HepG2 (cell line): ENCODE measurements at regions of chr17 and their contacts with region 1.

Region 1: DNA sequence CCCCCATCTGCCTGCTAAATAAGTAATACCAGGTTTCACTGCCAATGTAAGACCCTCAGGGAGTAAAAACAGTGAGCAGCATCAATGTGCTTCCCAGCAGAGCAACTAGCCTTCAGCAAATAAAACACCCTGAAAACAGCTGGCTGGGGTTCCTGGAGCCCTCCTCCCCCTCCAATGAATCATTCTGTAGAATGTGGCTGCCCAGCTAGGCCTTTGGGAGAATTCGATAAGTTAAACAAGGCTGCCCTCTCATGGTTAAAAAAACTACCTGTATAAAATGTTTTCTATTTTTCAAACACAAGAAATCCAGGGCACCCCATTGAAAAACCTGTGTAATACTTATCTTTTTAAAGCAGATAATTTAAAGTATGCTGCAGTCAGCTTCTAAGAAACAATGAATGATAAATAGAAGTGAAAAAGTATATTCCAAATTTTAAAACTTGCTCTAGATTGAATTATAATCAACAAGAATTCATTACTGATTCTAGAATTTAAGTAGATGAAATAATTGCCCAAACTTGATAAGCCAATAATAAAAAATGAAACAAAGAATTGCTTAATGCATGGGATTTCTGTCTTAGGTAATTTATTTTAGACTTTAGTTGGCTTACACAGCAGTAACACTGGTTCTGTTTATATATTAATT is 9.4 kb upstream of the TOM1L1 start:
- DNase-seq: peak; percentile 61
- ATAC-seq: peak; percentile 94
- H3K4me3 ChIP-seq: no peak overlapping the region
- H3K27ac ChIP-seq: no peak overlapping the region
- H3K4me1 ChIP-seq: no peaks in the 10 kb centered on the region
- H3K27me3 ChIP-seq: no peaks in the 10 kb centered on the region
- CTCF ChIP-seq: peak; percentile 75
- EP300 ChIP-seq: no peak
- POLR2A ChIP-seq: no peak
- RAD21 ChIP-seq: peak; percentile 63

Region 2: GRCh38 chr17:53032861-53033271 is 1858.4 kb before region 1 on chr17:
- CTCF ChIA-PET with region 1: interaction called, 5 read pairs
- POLR2A ChIA-PET with region 1: no interaction called
- in situ Hi-C with region 1: loop called (anchors 25 kb)
- intact Hi-C with region 1: no loop called
- DNase-seq: peak; percentile 71
- ATAC-seq: peak; percentile 90
- H3K4me3 ChIP-seq: no peak overlapping the region
- H3K27ac ChIP-seq: no peak overlapping the region
- H3K4me1 ChIP-seq: peaks cover 8% of the 10 kb centered on the region
- H3K27me3 ChIP-seq: no peaks in the 10 kb centered on the region
- CTCF ChIP-seq: peak; percentile 74
- EP300 ChIP-seq: no peak
- POLR2A ChIP-seq: no peak
- RAD21 ChIP-seq: peak; percentile 42; the same call in 1 of the 2 replicates

Region 3: DNA sequence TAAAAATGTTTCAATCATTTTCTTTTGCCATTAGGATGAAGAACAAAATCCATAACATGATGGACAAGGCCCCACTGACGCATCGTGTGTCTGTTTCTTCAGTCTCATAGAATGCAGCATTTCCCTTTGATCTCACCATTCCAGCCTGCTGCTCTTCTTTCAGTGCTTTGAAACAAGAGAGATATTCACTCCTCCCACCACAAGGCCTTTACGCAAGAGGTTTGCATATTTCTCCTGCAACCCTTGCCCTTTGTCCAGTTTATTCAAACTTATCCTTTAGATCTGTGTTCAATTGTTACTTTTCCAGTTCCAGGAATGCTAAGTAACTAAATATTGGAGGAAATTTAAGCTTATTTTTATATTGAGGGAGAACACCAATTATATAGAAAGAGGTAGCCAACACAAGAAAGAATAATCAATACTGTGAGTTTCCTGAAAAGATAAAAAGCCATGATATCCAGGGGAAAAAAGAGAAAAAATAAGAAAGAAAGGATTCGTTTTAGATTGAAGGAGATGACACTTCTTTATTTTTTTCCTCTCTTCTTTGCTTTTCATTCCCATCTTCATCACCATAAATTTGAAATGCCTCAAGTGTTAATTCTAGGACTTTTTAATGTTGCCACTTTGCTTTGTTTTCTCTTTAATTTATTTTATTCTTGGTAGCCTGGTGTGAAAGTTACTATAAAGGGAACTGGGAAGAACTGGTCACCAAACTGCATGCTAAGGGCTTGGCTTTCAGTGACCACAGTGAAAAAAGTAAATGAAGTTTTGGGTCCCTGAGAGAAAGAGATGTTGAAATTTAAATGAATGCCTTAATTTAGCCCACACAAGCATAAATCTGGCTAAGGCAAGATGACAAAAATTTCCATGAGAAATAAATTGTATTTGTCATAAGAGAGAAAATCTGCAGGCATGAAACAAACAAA is 966.5 kb before region 1 on chr17:
- CTCF ChIA-PET with region 1: no interaction called
- POLR2A ChIA-PET with region 1: no interaction called
- in situ Hi-C with region 1: loop called (anchors 25 kb)
- intact Hi-C with region 1: no loop called
- DNase-seq: peak; percentile 100
- ATAC-seq: peak; percentile 100
- H3K4me3 ChIP-seq: peak overlapping the region in 2 of 3 experiments; percentile 8 to 32; a peak in 2 of 6 replicates
- H3K27ac ChIP-seq: peak overlapping the region; percentile 80
- H3K4me1 ChIP-seq: peaks cover 36% of the 10 kb centered on the region
- H3K27me3 ChIP-seq: no peaks in the 10 kb centered on the region
- CTCF ChIP-seq: no peak
- EP300 ChIP-seq: peak; percentile 90 to 96
- POLR2A ChIP-seq: no peak
- RAD21 ChIP-seq: no peak

Region 4: GRCh38 chr17:54848368-54848987 is 42.8 kb before region 1 on chr17:
- CTCF ChIA-PET with region 1: no interaction called
- POLR2A ChIA-PET with region 1: no interaction called
- in situ Hi-C with region 1: no loop called
- intact Hi-C with region 1: no loop called
- DNase-seq: no peak
- ATAC-seq: no peak
- H3K4me3 ChIP-seq: no peak overlapping the region
- H3K27ac ChIP-seq: no peak overlapping the region
- H3K4me1 ChIP-seq: no peaks in the 10 kb centered on the region
- H3K27me3 ChIP-seq: no peaks in the 10 kb centered on the region
- CTCF ChIP-seq: no peak
- EP300 ChIP-seq: no peak
- POLR2A ChIP-seq: no peak
- RAD21 ChIP-seq: no peak

Region 5: DNA sequence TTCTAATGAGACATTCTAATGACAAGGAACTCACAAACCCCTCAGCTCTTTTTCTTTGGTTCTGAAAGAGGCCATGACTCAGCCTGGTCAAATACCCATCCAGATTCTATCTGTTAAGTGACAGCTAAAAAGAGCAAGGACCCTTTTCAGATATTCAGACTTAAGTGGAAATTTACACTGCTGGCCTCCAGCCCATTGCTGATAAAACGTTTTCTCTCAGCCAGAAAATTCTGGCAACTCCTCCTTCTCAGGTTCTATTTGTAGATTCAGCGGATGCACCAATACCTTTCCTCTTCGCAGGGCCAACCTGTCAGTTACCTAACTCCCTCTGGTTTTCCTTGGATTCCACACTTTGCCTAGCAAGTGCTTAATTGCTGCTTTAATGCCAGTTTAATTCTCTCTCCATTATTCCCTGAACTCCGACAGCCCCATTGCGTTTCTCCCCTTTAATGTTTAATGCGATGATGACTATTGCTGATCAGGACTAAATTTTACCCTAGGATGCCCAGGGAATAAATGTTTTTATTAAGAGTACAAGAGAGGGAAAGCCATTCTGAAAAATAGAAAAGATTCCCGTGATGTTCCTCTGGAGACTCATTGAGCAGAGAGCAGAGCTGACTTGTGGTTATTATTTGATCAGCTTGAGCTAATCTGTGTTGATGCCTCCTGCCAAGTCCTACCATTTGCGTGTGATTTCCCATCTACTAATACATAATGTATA is 26.5 kb before region 1 on chr17:
- CTCF ChIA-PET with region 1: no interaction called
- POLR2A ChIA-PET with region 1: no interaction called
- in situ Hi-C with region 1: no loop called
- intact Hi-C with region 1: no loop called
- DNase-seq: no peak
- ATAC-seq: no peak
- H3K4me3 ChIP-seq: no peak overlapping the region
- H3K27ac ChIP-seq: no peak overlapping the region
- H3K4me1 ChIP-seq: no peaks in the 10 kb centered on the region
- H3K27me3 ChIP-seq: no peaks in the 10 kb centered on the region
- CTCF ChIP-seq: no peak
- EP300 ChIP-seq: no peak
- POLR2A ChIP-seq: no peak
- RAD21 ChIP-seq: no peak